ENCODE measurements at regions of chr17 and their contacts with region 1.

Region 1: GRCh38 chr17:29645515-29646051 is 22.9 kb upstream of the CORO6 start:
- ATAC-seq: peak in 3 of 8 experiments; percentile 46 to 68 (median 56)
- H3K4me3 ChIP-seq: no peak overlapping the region
- H3K27ac ChIP-seq: no peak overlapping the region
- H3K4me1 ChIP-seq: peaks cover 6 to 7% of the 10 kb centered on the region in 2 donors

Region 2: GRCh38 chr17:29283271-29283895 is 362.2 kb before region 1 on chr17:
- in situ Hi-C with region 1: no loop called
- ATAC-seq: peak in 3 of 8 experiments; percentile 9 to 34 (median 10)
- H3K4me3 ChIP-seq: no peak overlapping the region
- H3K27ac ChIP-seq: no peak overlapping the region
- H3K4me1 ChIP-seq: peaks cover 5 to 7% of the 10 kb centered on the region in 2 donors

Region 3: GRCh38 chr17:29760761-29761696 is 115.4 kb after region 1 on chr17:
- in situ Hi-C with region 1: loop called in 1 of 9 experiments (anchors 25 kb)
- ATAC-seq: peak; percentile 95 to 98 (median 96)
- H3K4me3 ChIP-seq: peak overlapping the region; percentile 36 to 65 (median 51)
- H3K27ac ChIP-seq: no peak overlapping the region
- H3K4me1 ChIP-seq: peaks cover 0 to 4% of the 10 kb centered on the region in 2 donors

Region 4: GRCh38 chr17:29771551-29771950 is 126.0 kb after region 1 on chr17:
- in situ Hi-C with region 1: loop called in 3 of 9 experiments (anchors 10 to 25 kb)
- ATAC-seq: no peak
- H3K4me3 ChIP-seq: no peak overlapping the region
- H3K27ac ChIP-seq: no peak overlapping the region
- H3K4me1 ChIP-seq: no peaks in the 10 kb centered on the region

Region 5: GRCh38 chr17:29789196-29790170 is 143.9 kb after region 1 on chr17:
- in situ Hi-C with region 1: loop called in 1 of 9 experiments (anchors 25 kb)
- ATAC-seq: peak in 3 of 8 experiments; percentile 97 to 99 (median 97)
- H3K4me3 ChIP-seq: no peak overlapping the region
- H3K27ac ChIP-seq: no peak overlapping the region
- H3K4me1 ChIP-seq: no peaks in the 10 kb centered on the region